Activated CD4-positive, alpha-beta T cell treated with anti-CD3 and anti-CD28 coated beads, Interleukin-2, amount 10 ng/mL, durations not matched to agents 7 days and 5 days (primary cell): ENCODE measurements at regions of chr18 and their contacts with region 1.

Region 1: GRCh38 chr18:8654503-8655451 is 45.5 kb downstream of the RAB12 start:
- DNase-seq: no peak
- H3K4me3 Mint-ChIP-seq: no peak overlapping the region
- H3K27ac Mint-ChIP-seq: no peak overlapping the region
- H3K4me1 Mint-ChIP-seq: no peaks in the 10 kb centered on the region
- H3K27me3 Mint-ChIP-seq: peaks cover 26% of the 10 kb centered on the region

Region 2: GRCh38 chr18:8988261-8988871 is 333.6 kb after region 1 on chr18:
- CTCF ChIA-PET with region 1: interaction called, 10 read pairs
- POLR2A ChIA-PET with region 1: no interaction called
- DNase-seq: peak; percentile 67
- H3K4me3 Mint-ChIP-seq: no peak overlapping the region
- H3K27ac Mint-ChIP-seq: no peak overlapping the region
- H3K4me1 Mint-ChIP-seq: no peaks in the 10 kb centered on the region
- H3K27me3 Mint-ChIP-seq: peaks cover 4% of the 10 kb centered on the region